Right ventricle myocardium superior (tissue), 1 donor: ENCODE measurements at regions of chr10 and their contacts with region 1.

Region 1: DNA sequence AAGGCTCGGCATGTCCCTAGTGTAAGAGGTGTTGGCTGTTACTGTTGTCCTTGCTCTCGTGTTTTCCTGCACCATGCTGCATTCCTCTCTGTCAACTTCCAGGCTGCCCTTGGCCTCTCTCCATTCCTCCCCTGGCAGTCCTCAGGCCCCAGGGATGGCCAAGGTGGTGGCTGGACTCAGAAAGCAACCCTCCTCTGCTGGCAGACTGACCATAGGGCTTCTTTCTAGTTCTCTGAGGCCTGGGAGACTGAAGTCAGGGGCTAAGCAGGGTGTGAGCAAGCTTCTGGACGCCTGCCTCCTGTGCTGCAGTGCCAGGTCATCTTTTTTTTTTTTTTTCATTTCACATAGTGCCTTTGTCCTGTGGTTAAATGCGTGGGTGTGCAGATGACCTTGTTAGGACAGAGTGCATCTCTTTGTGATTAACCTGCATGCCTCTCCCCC is 72.0 kb downstream of the GOLGA7B start:
- DNase-seq: no peak
- ATAC-seq: peak; percentile 84

Region 2: DNA sequence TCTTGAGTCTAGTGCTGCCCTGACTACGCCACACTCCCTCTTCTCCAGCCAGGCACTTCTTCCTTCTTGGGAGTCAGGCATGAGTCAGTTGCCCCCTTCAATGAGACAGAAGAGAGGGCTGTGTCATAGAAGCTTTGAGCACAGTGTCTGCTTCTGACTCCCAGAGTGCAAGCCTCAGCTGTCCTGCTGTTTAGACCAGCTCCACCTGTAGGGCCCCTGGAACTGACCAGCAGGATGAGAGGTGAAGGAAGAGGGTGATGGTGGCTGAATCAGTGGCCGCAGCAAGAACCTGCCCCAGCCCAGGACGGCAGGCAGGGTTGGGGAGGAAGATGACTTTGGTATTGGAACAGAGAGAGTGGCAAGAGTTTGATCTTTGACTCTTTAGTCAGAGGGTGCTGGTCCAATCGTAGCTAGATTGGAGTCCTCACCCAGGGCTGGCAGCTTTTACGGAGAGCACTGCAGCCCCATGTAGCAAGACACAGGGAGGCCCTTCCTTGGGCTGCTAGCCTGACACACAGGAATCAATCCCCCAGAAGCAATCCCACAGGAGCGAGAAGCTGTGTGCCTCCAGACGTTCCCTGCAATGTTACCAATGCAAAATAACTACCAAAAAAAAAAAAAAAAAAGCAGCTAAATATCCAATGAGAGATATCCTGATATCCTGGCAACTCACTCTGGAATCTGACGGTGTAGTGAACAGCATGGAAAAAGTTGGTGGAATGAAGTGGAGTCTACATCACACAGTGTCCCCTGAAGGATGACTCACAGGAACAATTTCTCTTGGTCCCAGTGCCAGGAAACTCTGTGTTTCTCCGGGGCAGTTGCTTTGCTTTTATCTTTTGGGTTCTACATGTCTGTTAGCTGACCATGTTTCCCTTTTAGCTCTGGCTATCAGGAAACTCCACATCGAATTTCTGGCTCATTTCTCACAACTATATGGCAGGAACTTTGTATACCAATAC is 325.2 kb before region 1 on chr10:
- intact Hi-C with region 1: no loop called
- DNase-seq: no peak
- ATAC-seq: peak; percentile 94

Region 3: DNA sequence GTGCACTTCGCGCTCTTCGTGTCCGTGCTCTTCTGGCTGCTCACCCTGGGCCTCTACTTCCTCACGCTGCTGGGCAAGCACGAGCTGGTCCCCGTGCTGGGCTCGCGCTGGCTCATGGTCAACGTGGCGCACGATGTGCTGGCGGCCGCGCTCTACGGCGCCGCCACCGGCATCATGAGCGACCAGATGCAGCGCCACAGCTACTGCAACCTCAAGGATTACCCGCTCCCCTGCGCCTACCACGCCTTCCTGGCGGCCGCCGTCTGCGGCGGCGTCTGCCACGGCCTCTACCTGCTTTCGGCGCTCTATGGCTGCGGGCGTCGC is 207.6 kb before region 1 on chr10:
- intact Hi-C with region 1: no loop called
- DNase-seq: peak; percentile 86
- ATAC-seq: peak; percentile 80

Region 4: GRCh38 chr10:97780841-97781617 is 140.6 kb before region 1 on chr10:
- intact Hi-C with region 1: no loop called
- DNase-seq: no peak
- ATAC-seq: peak; percentile 16

Region 5: GRCh38 chr10:98028168-98028770 is 106.7 kb after region 1 on chr10:
- intact Hi-C with region 1: loop called (anchors 5 kb)
- DNase-seq: peak; percentile 57
- ATAC-seq: peak; percentile 50